Lower leg skin (tissue), 4 donors: ENCODE measurements at regions of chr5 and their contacts with region 1.

Region 1: DNA sequence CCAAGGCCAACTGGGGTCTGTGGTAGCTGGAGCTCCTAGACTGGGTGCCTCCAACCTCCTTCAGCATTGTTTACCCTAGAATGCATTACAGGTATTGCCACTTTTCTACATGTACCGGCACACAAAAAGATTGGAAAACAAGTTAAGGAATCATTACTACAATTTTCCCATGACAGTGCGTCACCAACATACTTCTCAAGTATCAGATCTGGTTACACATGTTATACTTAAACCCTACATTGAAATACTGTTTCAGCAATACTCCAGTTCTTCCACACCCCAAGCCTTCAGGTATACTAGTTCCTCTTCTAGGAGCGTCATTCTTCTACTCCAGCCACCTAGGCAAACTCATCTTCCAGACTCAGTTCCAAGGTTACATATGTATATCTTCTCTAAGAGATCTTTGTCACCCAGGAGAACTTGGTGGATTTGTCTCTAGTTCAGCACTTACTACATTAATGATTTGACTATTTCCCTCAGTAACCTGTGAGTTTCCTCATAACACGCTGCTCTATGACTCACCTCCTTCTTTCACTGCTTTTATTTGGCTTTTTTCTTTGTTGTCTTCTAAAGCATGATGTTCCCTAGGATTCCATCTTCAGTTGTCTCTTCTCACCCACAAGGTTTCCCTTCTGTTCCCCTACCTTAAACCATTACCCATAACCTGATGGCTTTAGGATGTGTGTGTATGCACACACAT is 217.0 kb downstream of the AP3B1 start:
- DNase-seq: no peak
- H3K4me3 ChIP-seq: no peak overlapping the region
- CTCF ChIP-seq: no peak
- POLR2A ChIP-seq: no peak

Region 2: DNA sequence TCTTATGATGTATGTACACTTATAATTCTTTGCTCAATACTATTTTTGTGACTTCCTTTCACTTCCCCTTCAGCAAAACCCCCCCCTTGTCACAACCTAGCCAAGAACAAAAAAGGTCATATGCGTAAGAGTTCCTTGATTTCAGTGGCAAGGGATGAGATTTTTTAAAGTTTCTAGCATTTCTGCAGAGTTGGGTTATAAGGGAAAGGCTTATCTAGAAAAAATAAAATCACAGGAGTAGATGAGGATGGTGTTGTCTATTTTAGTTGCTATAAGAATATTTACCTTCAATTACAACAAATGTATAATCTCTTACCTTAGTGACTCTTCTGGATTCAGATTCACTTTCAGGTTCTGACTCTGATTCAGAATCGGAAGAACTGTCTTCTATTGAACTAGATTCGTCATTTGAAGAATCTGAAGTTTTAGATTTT is 32.4 kb after region 1 on chr5:
- intact Hi-C with region 1: loop called (anchors 1 kb)
- DNase-seq: no peak
- H3K4me3 ChIP-seq: no peak overlapping the region
- CTCF ChIP-seq: no peak
- POLR2A ChIP-seq: no peak